OCI-LY7 (cell line): ENCODE measurements at regions of chr2 and their contacts with region 1.

Region 1: GRCh38 chr2:197310271-197310985 is at the start of gene ANKRD44:
- DNase-seq: peak; percentile 90
- H3K4me3 ChIP-seq: peak within 1 kb of the TSS; percentile 92
- H3K27ac ChIP-seq: peak within 1 kb of the TSS; percentile 83
- H3K4me1 ChIP-seq: peaks cover 57% of the 10 kb centered on the region
- CTCF ChIP-seq: 0 out of 2 replicates have a peak, but pooled peaks have one; percentile 31
- total RNA-seq, gene ANKRD44: 70.3 and 73.7 TPM in 2 replicates

Region 2: DNA sequence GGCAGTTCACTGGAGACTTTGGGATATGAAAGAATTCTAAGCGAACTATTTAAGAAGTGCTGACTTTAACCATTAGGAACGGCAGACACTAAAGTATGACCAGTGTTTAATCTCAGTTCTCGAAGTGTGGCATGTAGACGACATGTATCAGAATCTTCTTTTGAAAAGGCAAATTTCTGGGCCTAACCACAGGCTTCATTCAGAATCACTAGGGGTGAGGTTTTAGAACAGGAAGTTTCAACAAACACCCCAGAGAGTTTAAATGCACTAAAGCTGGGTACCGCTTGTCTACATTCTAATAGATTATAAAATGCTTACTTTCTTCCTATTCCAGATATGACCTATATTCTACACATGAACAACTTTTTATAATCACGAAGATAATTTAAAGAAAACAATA is 180.1 kb before region 1 on chr2:
- CTCF ChIA-PET with region 1: no interaction called
- POLR2A ChIA-PET with region 1: interaction called, 4 read pairs
- intact Hi-C with region 1: loop called (anchors 5 kb)
- DNase-seq: peak; percentile 79
- H3K4me3 ChIP-seq: peak overlapping the region; percentile 60
- H3K27ac ChIP-seq: peak overlapping the region; percentile 96
- H3K4me1 ChIP-seq: peaks cover 54% of the 10 kb centered on the region
- CTCF ChIP-seq: no peak

Region 3: GRCh38 chr2:197191177-197191939 is 119.1 kb before region 1 on chr2:
- CTCF ChIA-PET with region 1: interaction called, 6 read pairs
- POLR2A ChIA-PET with region 1: interaction called, 69 read pairs
- intact Hi-C with region 1: loop called (anchors 1 kb)
- DNase-seq: peak; percentile 83
- H3K4me3 ChIP-seq: no peak overlapping the region
- H3K27ac ChIP-seq: no peak overlapping the region
- H3K4me1 ChIP-seq: peaks cover 33% of the 10 kb centered on the region
- CTCF ChIP-seq: peak; percentile 99

Region 4: GRCh38 chr2:197209742-197210408 is 100.6 kb before region 1 on chr2:
- CTCF ChIA-PET with region 1: interaction called, 5 read pairs
- POLR2A ChIA-PET with region 1: interaction called, 31 read pairs
- intact Hi-C with region 1: loop called (anchors 1 kb)
- DNase-seq: peak; percentile 78
- H3K4me3 ChIP-seq: peak overlapping the region; percentile 45
- H3K27ac ChIP-seq: peak overlapping the region; percentile 96
- H3K4me1 ChIP-seq: peaks cover 100% of the 10 kb centered on the region
- CTCF ChIP-seq: no peak

Region 5: DNA sequence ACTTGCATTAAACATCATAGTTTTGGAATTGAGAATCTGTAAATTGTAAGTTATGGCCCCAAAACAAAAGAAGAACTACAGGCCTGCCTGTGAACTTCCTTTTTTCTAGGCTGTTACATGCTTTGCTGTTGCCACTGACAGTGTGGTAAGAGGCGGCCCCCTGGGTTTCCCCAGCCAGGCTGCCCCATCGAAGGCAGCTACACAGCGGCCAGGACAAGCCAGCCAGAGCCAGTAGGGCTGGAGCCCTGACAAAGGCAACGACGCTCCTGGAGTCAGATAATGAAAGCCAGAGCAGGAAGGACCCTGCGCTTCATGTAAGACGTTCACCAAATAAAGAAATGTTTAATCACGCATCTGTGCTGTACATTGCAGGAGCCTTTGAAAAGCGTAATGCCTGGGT is 54.9 kb before region 1 on chr2:
- CTCF ChIA-PET with region 1: interaction called, 7 read pairs
- POLR2A ChIA-PET with region 1: interaction called, 11 read pairs
- intact Hi-C with region 1: loop called (anchors 1 kb)
- DNase-seq: peak; percentile 91
- H3K4me3 ChIP-seq: peak overlapping the region; percentile 60
- H3K27ac ChIP-seq: peak overlapping the region; percentile 90
- H3K4me1 ChIP-seq: peaks cover 63% of the 10 kb centered on the region
- CTCF ChIP-seq: no peak

Region 6: DNA sequence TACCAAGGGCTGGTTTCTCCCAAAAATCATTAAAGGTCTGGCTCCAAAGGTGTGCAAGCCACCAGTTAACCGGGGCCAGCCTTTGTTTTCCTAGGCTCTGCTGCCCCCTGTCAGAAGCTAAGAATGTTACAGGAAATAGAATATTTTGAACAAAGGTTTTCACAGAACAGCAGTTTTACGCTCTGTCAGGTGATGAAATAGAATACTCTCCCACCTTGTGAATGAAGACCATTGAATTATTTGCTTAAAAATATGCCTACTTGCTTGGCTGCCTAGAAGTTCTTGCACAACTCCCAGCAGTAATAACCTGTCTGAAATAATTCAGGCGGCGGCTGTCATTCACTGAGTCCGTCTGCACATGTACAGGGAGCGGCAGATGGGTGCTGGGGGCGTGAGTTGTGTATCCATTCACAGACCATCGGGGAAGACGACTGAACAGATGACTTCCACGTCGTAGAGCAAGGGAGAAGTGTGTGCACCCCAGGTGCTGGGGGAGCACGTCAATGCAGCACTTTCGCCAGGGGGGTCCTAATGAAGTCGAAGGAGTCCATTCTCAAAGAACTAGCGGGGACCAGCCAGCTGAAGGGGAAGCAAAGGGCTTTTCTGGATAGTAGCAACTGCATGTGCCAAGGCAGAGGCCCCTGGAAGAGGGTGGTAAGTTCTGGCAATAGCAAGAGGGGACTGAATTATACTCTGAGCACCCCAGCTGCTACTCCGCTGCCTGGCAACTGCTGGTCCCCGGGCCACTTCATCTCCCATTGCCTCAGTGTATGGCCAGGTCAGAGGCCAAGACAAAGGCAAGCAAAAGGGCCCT is 68.3 kb after region 1 on chr2:
- CTCF ChIA-PET with region 1: no interaction called
- POLR2A ChIA-PET with region 1: no interaction called
- intact Hi-C with region 1: loop called (anchors 5 kb)
- DNase-seq: peak; percentile 74
- H3K4me3 ChIP-seq: no peak overlapping the region
- H3K27ac ChIP-seq: no peak overlapping the region
- H3K4me1 ChIP-seq: peaks cover 4% of the 10 kb centered on the region
- CTCF ChIP-seq: peak; percentile 96

Region 7: DNA sequence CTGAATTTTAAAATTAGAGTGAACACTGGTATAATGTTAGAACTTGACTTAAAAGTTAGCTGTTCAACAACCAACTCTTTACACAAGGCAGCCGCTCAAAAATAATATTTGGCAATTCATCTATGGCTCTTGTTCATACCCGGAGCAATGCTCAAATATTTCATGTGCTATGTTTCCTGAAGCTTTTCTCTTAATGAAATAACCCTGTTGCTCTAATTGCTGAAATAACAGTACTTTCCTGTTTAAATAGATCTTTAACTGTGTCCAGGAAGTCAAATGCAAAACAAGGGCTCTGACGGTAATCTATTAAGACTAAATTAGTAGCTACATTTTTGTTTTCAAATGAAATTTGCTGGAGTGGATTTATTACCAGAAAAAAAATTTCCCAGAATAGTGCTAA is 331.2 kb after region 1 on chr2:
- CTCF ChIA-PET with region 1: no interaction called
- POLR2A ChIA-PET with region 1: no interaction called
- intact Hi-C with region 1: no loop called
- DNase-seq: no peak
- H3K4me3 ChIP-seq: no peak overlapping the region
- H3K27ac ChIP-seq: no peak overlapping the region
- H3K4me1 ChIP-seq: no peaks in the 10 kb centered on the region
- CTCF ChIP-seq: no peak